Calu3 (cell line): ENCODE measurements at regions of chr2 and their contacts with region 1.

Region 1: DNA sequence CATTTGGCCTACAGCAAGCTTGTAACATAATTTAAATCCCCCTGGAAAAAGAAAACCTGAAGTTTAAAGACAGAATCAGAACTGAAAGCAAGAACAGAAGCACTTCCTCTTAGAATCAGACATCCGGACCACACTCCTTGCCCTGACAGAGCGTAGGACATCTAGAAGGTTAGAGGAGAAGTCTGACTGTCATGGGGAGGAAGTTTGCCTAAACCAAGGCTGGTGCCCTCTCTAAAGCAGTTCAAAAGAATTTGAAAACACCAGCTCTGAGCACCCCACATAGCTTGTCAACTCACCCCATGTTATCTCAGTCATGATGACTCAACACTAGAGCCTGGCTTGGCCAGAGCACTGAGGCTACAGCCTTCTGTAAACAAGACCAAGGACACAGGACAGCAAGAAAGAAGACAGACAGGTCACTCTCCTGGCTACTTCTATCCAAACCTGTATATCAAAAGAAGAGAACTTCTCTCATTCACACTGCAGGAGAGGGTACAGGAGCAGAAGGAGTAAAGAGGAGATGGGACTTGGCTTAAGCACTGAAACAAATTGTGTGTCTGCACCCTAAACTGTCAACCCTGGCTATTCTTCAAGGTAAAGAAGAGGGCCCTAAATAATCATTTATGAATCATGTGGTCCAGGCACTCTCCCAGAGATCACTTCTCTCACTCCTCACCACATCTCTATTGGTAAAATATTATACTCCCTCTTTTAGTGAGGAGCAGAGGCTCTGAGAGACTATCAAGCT is 198.6 kb downstream of the MEMO1 start:
- DNase-seq: no peak
- H3K4me3 Mint-ChIP-seq: no peak overlapping the region
- H3K27ac Mint-ChIP-seq: no peak overlapping the region
- H3K4me1 Mint-ChIP-seq: peaks cover 16% of the 10 kb centered on the region
- H3K27me3 Mint-ChIP-seq: no peaks in the 10 kb centered on the region
- CTCF ChIP-seq: no peak

Region 2: DNA sequence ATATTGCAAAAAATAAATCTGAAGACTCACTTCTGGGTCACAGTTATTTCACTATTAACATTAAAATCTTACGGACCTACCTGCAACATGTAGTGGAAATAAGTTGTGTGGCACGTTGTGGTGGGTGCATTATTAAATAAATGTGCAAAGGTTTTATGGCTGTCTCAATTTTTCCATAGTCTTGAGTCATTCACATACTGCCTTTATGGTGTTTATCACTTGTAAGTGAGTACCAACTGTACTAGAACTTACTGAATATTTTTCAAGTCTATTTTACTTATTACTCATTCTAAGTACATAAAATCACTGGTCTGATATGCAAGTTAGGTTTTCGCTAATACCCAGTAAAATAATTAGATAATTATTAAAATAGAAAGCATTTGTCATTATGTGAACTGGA is 305.8 kb after region 1 on chr2:
- CTCF ChIA-PET with region 1: interaction called, 10 read pairs
- intact Hi-C with region 1: no loop called
- DNase-seq: no peak
- H3K4me3 Mint-ChIP-seq: no peak overlapping the region
- H3K27ac Mint-ChIP-seq: no peak overlapping the region
- H3K4me1 Mint-ChIP-seq: peaks cover 26% of the 10 kb centered on the region
- H3K27me3 Mint-ChIP-seq: no peaks in the 10 kb centered on the region
- CTCF ChIP-seq: no peak

Region 3: DNA sequence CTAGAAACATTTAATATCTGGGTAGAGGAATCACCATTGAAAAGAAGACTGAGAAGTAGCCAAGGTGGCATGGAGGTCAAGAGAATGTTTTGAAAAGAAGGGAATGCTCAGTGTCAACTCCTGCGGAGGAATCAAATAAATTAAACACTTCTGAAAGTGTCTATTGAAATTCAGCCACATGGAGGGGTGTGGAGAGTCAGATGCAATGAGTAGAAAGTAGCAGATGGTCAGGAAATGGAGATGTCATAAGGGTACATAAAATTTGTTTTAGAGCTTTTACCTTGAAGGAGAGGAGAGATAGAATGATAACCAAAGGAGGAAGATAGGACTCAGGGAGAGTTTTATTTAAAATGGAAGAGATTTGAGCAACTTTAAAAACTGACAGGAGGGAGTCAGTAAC is 417.4 kb after region 1 on chr2:
- CTCF ChIA-PET with region 1: no interaction called
- intact Hi-C with region 1: no loop called
- DNase-seq: no peak
- H3K4me3 Mint-ChIP-seq: no peak overlapping the region
- H3K27ac Mint-ChIP-seq: no peak overlapping the region
- H3K4me1 Mint-ChIP-seq: peaks cover 10% of the 10 kb centered on the region
- H3K27me3 Mint-ChIP-seq: no peaks in the 10 kb centered on the region
- CTCF ChIP-seq: no peak